Prostate gland (tissue), 2 donors: ENCODE measurements at regions of chr10 and their contacts with region 1.

Region 1: GRCh38 chr10:71396084-71396720 is 518 bp upstream of the CDH23 start:
- DNase-seq: peak; percentile 52
- H3K4me3 ChIP-seq: peak overlapping the region; percentile 43 to 53
- H3K27ac ChIP-seq: peak overlapping the region; percentile 42 to 46
- H3K4me1 ChIP-seq: no peaks in the 10 kb centered on the region
- H3K27me3 ChIP-seq: no peaks in the 10 kb centered on the region
- CTCF ChIP-seq: peak; percentile 25 to 86 (median 69)
- POLR2A ChIP-seq: no peak

Region 2: DNA sequence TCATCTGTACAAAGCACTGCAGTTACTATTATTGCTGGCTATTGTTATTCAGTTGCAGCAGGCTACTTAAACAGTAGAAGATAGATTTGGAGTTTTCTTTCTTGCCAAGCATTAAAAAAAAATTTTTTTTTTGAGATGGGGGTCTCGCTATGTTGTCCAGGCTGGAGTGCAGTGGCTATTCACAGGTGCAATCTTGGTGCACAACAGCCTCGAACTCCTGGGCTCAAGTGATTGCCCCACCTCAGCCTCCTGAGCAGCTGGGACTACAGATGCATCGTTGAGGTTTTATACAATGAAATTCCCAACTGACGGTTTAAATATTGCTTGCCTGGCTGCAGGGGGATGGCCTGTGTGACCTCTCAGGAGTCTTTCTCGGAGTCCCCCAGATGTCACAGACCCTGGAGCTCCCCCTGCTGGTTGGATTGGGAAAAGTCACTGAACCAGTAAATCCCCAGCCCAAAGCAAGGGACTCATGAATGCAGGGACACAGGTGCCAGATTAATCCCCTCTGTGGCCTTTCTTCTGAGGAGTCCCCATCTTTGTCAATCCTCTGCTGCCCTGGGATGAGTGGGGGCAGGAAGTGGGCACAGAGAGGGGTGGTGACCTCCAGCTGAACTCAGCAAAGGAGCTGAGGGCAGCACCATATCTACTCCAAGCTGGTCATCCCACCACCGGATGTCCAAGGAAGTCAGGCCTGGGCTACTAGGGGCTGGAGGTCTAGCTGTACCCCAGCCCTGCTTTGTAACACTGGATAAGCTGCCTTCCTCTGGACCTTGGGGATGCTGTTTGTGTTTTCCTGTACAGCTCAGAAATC is 173.8 kb after region 1 on chr10:
- intact Hi-C with region 1: loop called (anchors 5 kb)
- DNase-seq: peak; percentile 71
- H3K4me3 ChIP-seq: no peak overlapping the region
- H3K27ac ChIP-seq: no peak overlapping the region
- H3K4me1 ChIP-seq: no peaks in the 10 kb centered on the region
- H3K27me3 ChIP-seq: no peaks in the 10 kb centered on the region
- CTCF ChIP-seq: peak; percentile 77 to 92 (median 88)
- POLR2A ChIP-seq: no peak

Region 3: DNA sequence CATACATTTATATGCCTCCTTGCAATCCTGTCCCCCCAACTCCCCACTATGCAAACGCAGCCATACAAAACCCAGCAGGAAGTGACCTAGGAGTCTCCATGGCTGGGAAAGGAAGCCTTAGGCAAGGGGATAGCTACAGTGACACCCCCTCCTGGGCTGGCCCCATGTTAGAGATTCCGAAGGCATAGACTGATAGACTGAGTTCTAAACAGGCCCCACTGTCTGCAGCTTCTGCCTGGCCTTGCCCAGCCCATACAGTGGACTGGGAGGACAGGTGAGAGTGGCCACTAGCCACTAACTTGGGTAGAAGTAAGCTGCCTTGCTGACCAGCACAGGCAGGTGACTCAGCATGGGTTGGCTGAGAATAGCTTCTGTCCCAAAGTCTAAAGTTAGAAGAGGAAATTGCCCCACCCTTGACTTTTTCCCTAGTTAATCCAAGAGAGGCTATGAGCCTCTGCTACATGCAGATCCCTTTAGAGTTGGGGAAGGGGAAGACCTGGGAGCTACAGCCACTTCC is 217.1 kb after region 1 on chr10:
- intact Hi-C with region 1: loop called (anchors 5 kb)
- DNase-seq: no peak
- H3K4me3 ChIP-seq: no peak overlapping the region
- H3K27ac ChIP-seq: no peak overlapping the region
- H3K4me1 ChIP-seq: no peaks in the 10 kb centered on the region
- H3K27me3 ChIP-seq: no peaks in the 10 kb centered on the region
- CTCF ChIP-seq: no peak
- POLR2A ChIP-seq: no peak

Region 4: DNA sequence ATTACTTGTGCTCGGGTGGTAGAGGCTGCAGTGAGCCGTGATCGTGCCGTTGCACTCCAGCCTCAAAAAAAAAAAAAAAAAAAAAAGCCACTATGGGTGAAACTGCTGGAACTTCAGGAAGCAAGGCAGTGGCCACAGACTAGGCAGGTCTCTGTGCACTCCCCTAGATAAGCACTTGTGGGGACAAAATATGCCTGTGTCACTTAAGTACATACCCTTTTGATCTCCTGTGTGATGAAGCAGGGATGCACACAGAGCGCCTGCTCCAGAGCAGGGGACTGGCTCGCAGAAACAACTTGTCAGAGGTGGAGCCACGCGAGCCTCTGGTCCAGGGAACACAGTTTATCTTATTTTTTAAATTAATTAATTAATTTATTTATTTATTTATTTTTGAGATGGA is 497.7 kb after region 1 on chr10:
- intact Hi-C with region 1: loop called (anchors 10 kb)
- DNase-seq: no peak
- H3K4me3 ChIP-seq: no peak overlapping the region
- H3K27ac ChIP-seq: no peak overlapping the region
- H3K4me1 ChIP-seq: no peaks in the 10 kb centered on the region
- H3K27me3 ChIP-seq: no peaks in the 10 kb centered on the region
- CTCF ChIP-seq: no peak
- POLR2A ChIP-seq: no peak